GM18951 (cell line): ENCODE measurements at regions of chr2 and their contacts with region 1.

Region 1: GRCh38 chr2:43239981-43240761 is 13.8 kb upstream of the ZFP36L2 start:
- POLR2A ChIP-seq: no peak

Region 2: GRCh38 chr2:42944779-42945415 is 295.3 kb before region 1 on chr2:
- in situ Hi-C with region 1: loop called (anchors 10 kb)
- POLR2A ChIP-seq: no peak

Region 3: GRCh38 chr2:43127208-43127940 is 112.8 kb before region 1 on chr2:
- in situ Hi-C with region 1: loop called (anchors 10 kb)
- POLR2A ChIP-seq: no peak

Region 4: GRCh38 chr2:43387092-43388062 is 147.2 kb after region 1 on chr2:
- in situ Hi-C with region 1: loop called (anchors 10 kb)
- POLR2A ChIP-seq: no peak

Region 5: GRCh38 chr2:43478411-43479086 is 238.4 kb after region 1 on chr2:
- in situ Hi-C with region 1: no loop called
- POLR2A ChIP-seq: no peak